ENCODE measurements at regions of chr3 and their contacts with region 1.

Region 1: DNA sequence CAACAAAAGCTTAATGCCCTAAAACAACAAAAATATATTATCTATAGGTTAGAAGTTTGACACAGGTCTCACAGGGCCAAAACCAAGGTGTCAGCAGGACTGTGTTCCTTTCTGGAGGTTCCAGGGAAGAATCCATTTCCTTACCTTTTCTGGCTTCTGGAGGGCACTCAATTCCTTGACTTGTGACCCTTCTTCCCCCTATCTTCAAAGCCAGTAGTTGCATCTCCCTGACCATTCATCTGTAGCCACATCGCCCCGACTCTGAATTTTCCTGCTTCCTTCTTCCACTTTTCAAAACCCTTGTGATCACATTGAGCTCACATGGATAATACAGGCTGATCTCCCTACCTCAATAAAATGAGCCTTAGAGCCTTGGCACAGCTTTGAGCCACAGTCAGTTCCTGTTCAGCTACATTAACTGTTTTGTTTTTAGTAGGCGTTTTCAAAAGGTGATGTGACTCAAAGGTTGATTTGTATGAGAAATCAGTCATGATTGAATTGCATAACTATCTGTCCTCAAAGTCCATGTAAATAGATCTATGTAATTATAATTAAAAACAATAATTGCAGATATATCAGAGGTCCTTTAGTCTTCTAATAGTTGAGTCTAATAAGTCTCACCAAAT is 12.4 kb downstream of the PFN2 start:
- DNase-seq: no peak
- ATAC-seq: no peak

Region 2: GRCh38 chr3:149435996-149436885 is 522.0 kb before region 1 on chr3:
- intact Hi-C with region 1: loop called (anchors 5 kb)
- DNase-seq: no peak
- ATAC-seq: no peak

Region 3: DNA sequence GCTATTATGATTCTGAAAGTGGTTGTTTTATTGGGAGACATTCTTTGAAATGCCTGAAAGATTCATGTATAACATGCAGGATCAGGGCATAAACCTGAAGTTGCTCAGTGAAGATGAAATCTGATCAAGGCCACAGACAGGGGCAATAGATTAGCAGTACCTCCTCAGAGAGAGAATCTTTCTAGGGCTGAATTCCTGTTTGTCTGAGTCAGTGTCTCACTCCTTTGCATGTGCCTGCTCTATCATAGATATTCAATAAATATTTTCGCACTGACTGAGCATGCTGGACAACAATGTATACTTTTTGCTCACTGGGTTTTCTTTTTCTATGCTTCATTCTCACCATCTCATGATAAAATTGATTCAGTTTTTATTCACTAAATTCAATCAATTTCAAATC is 62.2 kb after region 1 on chr3:
- intact Hi-C with region 1: no loop called
- DNase-seq: no peak
- ATAC-seq: no peak

Region 4: GRCh38 chr3:150094150-150094925 is 136.1 kb after region 1 on chr3:
- intact Hi-C with region 1: no loop called
- DNase-seq: no peak
- ATAC-seq: no peak

Measured in sciatic nerve (tissue), 2 donors.